Mucosa of descending colon (tissue), 3 donors: ENCODE measurements at regions of chr12 and their contacts with region 1.

Region 1: DNA sequence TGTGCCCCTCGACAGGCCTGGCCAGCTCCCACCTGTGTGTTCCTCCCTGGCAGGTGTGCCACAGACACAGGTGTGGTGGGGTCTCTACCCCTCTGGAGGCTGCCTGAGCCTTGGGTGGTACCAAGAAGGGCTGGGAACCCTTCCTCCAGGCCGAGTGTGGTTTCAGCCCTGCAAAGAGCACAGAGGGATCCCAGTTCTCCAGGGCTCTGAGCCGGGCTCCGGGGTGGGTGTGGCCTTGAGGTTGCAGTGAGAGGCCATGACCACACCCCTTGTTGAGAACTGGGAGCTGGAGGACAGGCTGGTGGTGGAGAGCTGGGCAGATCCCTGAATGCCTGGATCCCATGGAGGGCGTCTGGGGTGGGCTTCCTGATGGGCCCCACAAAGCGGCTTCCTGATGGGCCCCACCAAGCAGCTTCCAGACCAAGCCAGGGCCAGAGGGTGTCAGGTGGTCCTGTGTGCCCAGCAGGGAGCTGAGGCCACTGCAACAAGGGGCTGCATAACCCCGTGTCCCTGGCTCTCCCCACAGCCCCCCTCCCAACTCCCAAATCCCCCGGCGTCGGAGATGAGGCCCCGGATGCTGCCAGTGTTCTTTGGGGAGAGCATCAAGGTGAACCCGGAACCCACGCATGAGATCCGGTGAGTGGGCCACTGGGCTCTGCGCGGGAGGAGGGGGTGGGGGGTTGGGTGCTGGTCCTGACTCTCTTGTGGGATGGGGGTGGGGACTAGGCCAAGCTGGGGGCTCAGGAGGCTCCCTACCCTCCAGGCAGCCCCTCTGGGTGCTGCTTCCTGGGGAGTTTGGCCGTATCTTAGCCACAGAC is 16.6 kb downstream of the RFLNA start:
- DNase-seq: peak; percentile 49 to 65 (median 53)
- ATAC-seq: peak; percentile 55
- H3K4me3 ChIP-seq: no peak overlapping the region
- H3K4me1 ChIP-seq: no peaks in the 10 kb centered on the region
- CTCF ChIP-seq: no peak

Region 2: GRCh38 chr12:124053851-124054250 is 257.6 kb before region 1 on chr12:
- intact Hi-C with region 1: loop called in 1 of 2 experiments (anchors 10 kb)
- DNase-seq: peak in 2 of 3 donors; percentile 54 to 58
- ATAC-seq: peak; percentile 57
- H3K4me3 ChIP-seq: no peak overlapping the region
- H3K4me1 ChIP-seq: peaks cover 2% of the 10 kb centered on the region
- CTCF ChIP-seq: peak; percentile 10

Region 3: DNA sequence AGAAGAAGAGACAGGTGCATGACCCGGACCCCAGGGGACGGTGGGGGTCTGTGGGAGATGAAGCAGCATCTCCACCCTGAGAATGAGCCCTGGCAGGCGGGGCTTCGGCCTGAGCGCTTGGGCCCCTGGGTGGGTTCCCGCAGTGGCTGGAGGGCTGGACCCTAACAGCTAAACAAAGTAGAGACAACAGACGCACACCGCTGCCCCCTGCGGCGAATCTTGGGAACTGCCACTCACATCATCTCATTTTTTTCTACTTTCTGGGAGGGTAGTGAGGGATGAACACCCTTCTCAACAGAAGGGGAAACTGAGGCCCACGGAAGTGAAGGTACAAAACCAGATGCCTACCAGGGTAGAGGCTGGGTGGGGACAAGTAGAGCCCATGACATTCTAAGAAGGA is 88.1 kb after region 1 on chr12:
- intact Hi-C with region 1: no loop called
- DNase-seq: peak in 2 of 3 donors; percentile 40 to 58
- ATAC-seq: no peak
- H3K4me3 ChIP-seq: no peak overlapping the region
- H3K4me1 ChIP-seq: peaks cover 23% of the 10 kb centered on the region
- CTCF ChIP-seq: peak; percentile 55